IMR-90 (cell line): ENCODE measurements at regions of chr1 and their contacts with region 1.

Region 1: GRCh38 chr1:119773711-119774241 is 5.1 kb upstream of the HMGCS2 start:
- DNase-seq: peak; percentile 52
- ATAC-seq: peak; percentile 87
- H3K4me3 ChIP-seq: no peak overlapping the region
- H3K27ac ChIP-seq: no peak overlapping the region
- H3K4me1 ChIP-seq: peaks cover 5% of the 10 kb centered on the region
- H3K27me3 ChIP-seq: peaks cover 5% of the 10 kb centered on the region; the same call in 1 of the 2 replicates
- CTCF ChIP-seq: no peak
- POLR2A ChIP-seq: no peak
- RAD21 ChIP-seq: no peak

Region 2: DNA sequence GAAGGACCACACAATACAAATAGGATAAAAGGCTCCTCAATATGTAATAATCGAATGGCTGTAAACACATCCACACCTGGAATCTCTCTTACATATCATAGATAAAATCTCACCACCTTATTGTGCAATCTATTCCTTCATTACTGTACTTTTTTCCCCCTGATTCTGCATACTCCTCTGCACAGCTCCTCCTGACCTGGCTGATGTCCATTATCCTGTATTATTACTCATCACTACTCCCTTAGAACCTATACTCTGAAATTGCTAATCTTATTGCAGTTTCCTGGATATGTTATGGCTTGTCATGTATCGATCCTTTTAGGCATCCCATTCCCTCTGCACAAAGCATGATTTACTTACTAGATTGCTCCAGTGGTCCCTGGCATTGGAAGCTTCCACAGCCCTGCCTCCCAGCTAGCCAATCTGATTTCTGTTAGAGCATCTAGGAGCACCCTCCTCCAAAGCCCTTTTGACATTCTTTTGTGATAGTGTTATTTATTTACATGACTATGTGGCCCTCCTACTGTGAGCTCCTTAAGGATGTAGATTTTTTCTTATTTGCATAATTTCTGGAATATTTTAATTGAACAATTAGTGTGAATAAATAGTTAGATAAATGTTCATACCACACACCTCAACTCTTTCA is 86.2 kb before region 1 on chr1:
- CTCF ChIA-PET with region 1: no interaction called
- POLR2A ChIA-PET with region 1: no interaction called
- dilution Hi-C with region 1: no loop called
- in situ Hi-C with region 1: no loop called
- intact Hi-C with region 1: no loop called
- DNase-seq: no peak
- ATAC-seq: no peak
- H3K4me3 ChIP-seq: no peak overlapping the region
- H3K27ac ChIP-seq: no peak overlapping the region
- H3K4me1 ChIP-seq: no peaks in the 10 kb centered on the region
- H3K27me3 ChIP-seq: peaks cover 14% of the 10 kb centered on the region
- CTCF ChIP-seq: no peak
- POLR2A ChIP-seq: no peak
- RAD21 ChIP-seq: no peak

Region 3: GRCh38 chr1:119720866-119721440 is 52.8 kb before region 1 on chr1:
- CTCF ChIA-PET with region 1: no interaction called
- POLR2A ChIA-PET with region 1: no interaction called
- dilution Hi-C with region 1: no loop called
- in situ Hi-C with region 1: loop called (anchors 5 kb)
- intact Hi-C with region 1: no loop called
- DNase-seq: no peak
- ATAC-seq: no peak
- H3K4me3 ChIP-seq: no peak overlapping the region
- H3K27ac ChIP-seq: no peak overlapping the region
- H3K4me1 ChIP-seq: no peaks in the 10 kb centered on the region; the same call in 1 of the 2 replicates
- H3K27me3 ChIP-seq: no peaks in the 10 kb centered on the region
- CTCF ChIP-seq: no peak
- POLR2A ChIP-seq: no peak
- RAD21 ChIP-seq: no peak